ENCODE measurements at regions of chr2 and their contacts with region 1.

Region 1: GRCh38 chr2:85707304-85707703 is 13.1 kb downstream of the GNLY start:
- DNase-seq: peak in 1 of 2 donors; percentile 83
- ATAC-seq: peak in 6 of 8 donors; percentile 25 to 31 (median 28)
- H3K4me3 ChIP-seq: no peak overlapping the region
- H3K27ac ChIP-seq: peak overlapping the region in 7 of 10 donors; percentile 7 to 86 (median 58)
- H3K4me1 ChIP-seq: peaks cover 5 to 95% (median 43%) of the 10 kb centered on the region in 9 donors
- H3K27me3 ChIP-seq: no peaks in the 10 kb centered on the region
- CTCF ChIP-seq: peak; percentile 87 to 94 (median 89)

Region 2: DNA sequence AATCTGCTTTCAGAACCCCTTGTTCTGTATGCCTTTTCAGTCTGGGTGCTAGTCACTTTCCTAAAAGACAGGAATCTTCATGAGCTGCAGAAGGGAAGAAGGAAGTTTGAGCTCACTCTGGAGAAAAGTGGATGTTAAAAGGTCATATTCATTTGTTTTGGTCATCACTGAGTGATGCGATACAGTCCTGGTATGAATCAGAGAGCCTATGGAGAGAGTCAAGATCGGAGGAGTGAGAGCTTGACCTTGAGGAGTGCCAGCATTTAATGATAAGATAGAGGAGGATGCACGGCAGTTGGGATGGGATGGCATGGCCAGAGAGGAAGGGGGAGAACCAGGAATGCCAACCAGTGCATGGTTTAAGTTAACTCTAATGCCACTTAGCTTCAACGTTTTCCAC is 71.7 kb before region 1 on chr2:
- intact Hi-C with region 1: loop called in 7 of 10 experiments (anchors 2 to 10 kb)
- DNase-seq: no peak
- ATAC-seq: peak in 3 of 8 donors; percentile 42 to 60 (median 59)
- H3K4me3 ChIP-seq: no peak overlapping the region
- H3K27ac ChIP-seq: peak overlapping the region in 1 of 10 donors; percentile 4
- H3K4me1 ChIP-seq: peaks cover 0 to 14% (median 0%) of the 10 kb centered on the region in 9 donors
- H3K27me3 ChIP-seq: no peaks in the 10 kb centered on the region
- CTCF ChIP-seq: no peak

Region 3: DNA sequence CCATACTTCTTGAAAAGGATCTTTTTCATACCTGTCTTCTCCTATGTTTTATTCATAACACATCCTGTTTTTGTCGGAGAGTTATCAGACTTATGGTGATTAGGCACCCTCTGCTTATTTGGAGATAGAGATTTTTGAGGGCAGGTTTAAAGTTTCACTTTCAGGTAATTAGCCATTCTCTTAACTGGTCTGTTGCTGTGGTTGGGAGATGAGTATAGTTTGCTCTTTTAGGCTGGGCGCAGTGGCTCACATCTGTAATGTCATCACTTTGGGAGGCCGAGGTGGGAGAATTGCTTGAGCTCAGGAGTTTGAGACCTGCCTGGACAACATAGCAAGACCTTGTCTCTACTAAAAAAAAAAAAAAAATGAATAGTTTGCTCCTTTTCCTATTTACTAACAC is 64.6 kb before region 1 on chr2:
- intact Hi-C with region 1: loop called in 9 of 10 experiments (anchors 2 to 10 kb)
- DNase-seq: no peak
- ATAC-seq: no peak
- H3K4me3 ChIP-seq: no peak overlapping the region
- H3K27ac ChIP-seq: no peak overlapping the region
- H3K4me1 ChIP-seq: peaks cover 0 to 1% (median 0%) of the 10 kb centered on the region in 9 donors
- H3K27me3 ChIP-seq: no peaks in the 10 kb centered on the region
- CTCF ChIP-seq: no peak

Region 4: GRCh38 chr2:85648619-85649018 is 58.7 kb before region 1 on chr2:
- intact Hi-C with region 1: loop called in 5 of 10 experiments (anchors 5 to 10 kb)
- DNase-seq: no peak
- ATAC-seq: peak in 7 of 8 donors; percentile 30 to 77 (median 48)
- H3K4me3 ChIP-seq: no peak overlapping the region
- H3K27ac ChIP-seq: peak overlapping the region in 6 of 10 donors; percentile 8 to 56 (median 46)
- H3K4me1 ChIP-seq: peaks cover 0 to 17% (median 12%) of the 10 kb centered on the region in 9 donors
- H3K27me3 ChIP-seq: no peaks in the 10 kb centered on the region
- CTCF ChIP-seq: peak; percentile 23 to 65 (median 44)

Region 5: GRCh38 chr2:85678794-85679672 is 28.3 kb before region 1 on chr2:
- intact Hi-C with region 1: loop called in 6 of 10 experiments (anchors 1 to 5 kb)
- DNase-seq: peak; percentile 89 to 91
- ATAC-seq: peak; percentile 86 to 96 (median 92)
- H3K4me3 ChIP-seq: no peak overlapping the region
- H3K27ac ChIP-seq: peak overlapping the region; percentile 2 to 79 (median 46)
- H3K4me1 ChIP-seq: peaks cover 9 to 45% (median 32%) of the 10 kb centered on the region in 9 donors
- H3K27me3 ChIP-seq: no peaks in the 10 kb centered on the region
- CTCF ChIP-seq: peak; percentile 97 to 99 (median 98)